Tibial artery (tissue), 4 donors: ENCODE measurements at regions of chr3 and their contacts with region 1.

Region 1: DNA sequence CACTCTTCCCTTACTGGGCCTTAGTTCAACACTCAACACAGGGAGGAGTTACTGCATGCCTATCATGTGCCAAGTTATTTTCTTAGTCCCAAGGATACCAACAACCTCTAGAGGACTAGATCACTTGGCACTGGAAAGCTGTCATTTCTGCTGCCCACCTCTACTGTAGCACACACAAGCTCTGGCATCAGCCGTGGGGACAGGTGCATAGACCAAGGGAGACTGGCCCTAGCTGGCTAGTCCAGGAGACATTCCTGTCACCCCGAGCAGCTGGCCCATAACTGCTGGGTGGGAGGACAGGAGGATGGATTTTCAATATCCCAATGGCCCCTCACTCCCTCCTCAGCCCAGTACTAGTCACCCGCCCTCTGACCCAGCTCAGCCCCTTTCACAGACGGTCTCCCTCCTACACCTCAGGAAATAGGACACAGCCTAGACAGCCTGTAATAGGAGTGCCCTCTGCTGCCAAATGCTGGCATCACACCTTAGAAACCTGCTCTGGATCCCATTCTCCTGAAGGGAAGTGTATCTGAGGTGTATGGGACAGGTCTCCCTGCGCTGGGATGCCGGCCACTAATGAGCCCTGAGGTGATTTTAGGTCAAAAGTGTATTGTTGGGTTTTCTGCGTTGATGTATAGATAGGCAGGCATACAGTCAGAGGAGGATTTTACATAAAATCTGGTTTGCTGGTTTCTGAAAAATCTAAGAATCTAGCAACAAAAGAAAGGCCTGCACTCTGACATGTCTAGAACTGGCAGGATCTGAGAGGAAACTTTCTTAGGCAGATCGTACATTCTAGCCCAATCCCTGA is 3.4 kb upstream of the DZIP1L start:
- DNase-seq: peak; percentile 82 to 88
- H3K4me3 ChIP-seq: no peak overlapping the region
- H3K27ac ChIP-seq: no peak overlapping the region
- H3K4me1 ChIP-seq: peaks cover 0 to 30% (median 16%) of the 10 kb centered on the region in 4 donors
- H3K27me3 ChIP-seq: no peaks in the 10 kb centered on the region
- CTCF ChIP-seq: peak; percentile 74 to 83

Region 2: DNA sequence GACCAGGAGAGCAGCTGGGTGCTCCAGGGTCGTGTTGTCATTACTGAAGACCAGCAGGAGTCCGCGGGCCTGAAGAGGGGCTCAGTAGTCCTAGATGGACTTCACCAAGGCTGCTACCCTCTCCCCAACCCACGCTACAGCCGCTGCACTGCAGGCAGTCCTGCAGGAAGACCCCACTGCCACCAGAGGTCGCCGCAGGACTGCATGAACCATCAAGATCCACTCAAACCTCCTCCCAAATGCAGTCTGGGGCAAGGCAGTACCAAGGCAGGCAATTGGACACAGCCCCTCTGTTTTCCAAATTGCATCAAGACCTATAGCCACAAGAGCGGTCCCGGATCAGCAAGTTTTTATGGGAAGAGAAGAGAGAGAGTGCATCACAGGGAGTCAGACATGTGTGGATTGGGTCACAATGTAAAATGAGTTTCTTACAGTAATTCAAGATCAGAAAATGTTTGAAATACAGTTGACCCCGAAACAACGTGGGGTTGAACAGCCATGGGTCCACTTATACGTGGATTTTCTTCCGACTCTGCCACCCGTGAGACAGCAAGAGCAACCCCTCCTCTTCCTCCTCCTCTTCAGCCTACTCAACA is 50.1 kb before region 1 on chr3:
- intact Hi-C with region 1: loop called (anchors 1 kb)
- DNase-seq: peak; percentile 74 to 82
- H3K4me3 ChIP-seq: no peak overlapping the region
- H3K27ac ChIP-seq: no peak overlapping the region
- H3K4me1 ChIP-seq: no peaks in the 10 kb centered on the region
- H3K27me3 ChIP-seq: no peaks in the 10 kb centered on the region
- CTCF ChIP-seq: peak; percentile 93 to 97

Region 3: DNA sequence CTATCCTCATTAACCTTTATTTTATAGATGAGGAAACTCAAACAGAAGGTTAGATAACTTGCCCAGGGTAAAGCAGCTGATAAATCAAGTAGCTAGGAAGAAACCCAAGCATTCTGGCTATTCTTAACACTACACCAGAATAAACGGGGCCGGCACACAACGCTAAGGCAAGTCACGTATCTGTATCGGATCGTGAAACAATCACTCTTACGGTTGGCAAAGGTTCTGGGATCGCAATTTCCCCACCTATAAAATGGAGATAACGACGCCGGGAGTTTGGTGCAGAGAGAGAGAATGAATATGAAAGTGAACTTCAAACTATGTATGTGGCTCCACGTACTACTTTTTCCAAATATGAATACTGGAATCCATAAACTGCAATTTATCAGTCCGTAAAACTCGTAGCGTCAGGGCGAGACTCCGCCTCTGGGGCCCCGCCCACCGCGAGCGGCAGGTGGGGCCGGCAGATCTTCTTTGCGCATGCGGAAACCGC is 68.0 kb after region 1 on chr3:
- intact Hi-C with region 1: loop called (anchors 5 kb)
- DNase-seq: peak; percentile 88 to 94
- H3K4me3 ChIP-seq: peak overlapping the region; percentile 69 to 83
- H3K27ac ChIP-seq: peak overlapping the region; percentile 88 to 96
- H3K4me1 ChIP-seq: peaks cover 0 to 35% (median 21%) of the 10 kb centered on the region in 4 donors
- H3K27me3 ChIP-seq: no peaks in the 10 kb centered on the region
- CTCF ChIP-seq: no peak